ENCODE measurements at regions of chr20 and their contacts with region 1.

Region 1: GRCh38 chr20:36591854-36592641 is 13.5 kb upstream of the RAB5IF start:
- DNase-seq: peak in 5 of 10 donors; percentile 25 to 55 (median 38)
- H3K4me3 ChIP-seq: no peak overlapping the region
- H3K27ac ChIP-seq: no peak overlapping the region
- H3K27me3 ChIP-seq: no peaks in the 10 kb centered on the region
- CTCF ChIP-seq: peak in 53 of 56 donors; percentile 33 to 70 (median 52)

Region 2: GRCh38 chr20:36550797-36551299 is 41.2 kb before region 1 on chr20:
- intact Hi-C with region 1: loop called (anchors 5 kb)
- DNase-seq: no peak
- H3K4me3 ChIP-seq: no peak overlapping the region
- H3K27ac ChIP-seq: peak overlapping the region in 2 of 59 donors; percentile 5 to 41
- H3K27me3 ChIP-seq: no peaks in the 10 kb centered on the region
- CTCF ChIP-seq: no peak